PC-9 (cell line): ENCODE measurements at regions of chr9 and their contacts with region 1.

Region 1: DNA sequence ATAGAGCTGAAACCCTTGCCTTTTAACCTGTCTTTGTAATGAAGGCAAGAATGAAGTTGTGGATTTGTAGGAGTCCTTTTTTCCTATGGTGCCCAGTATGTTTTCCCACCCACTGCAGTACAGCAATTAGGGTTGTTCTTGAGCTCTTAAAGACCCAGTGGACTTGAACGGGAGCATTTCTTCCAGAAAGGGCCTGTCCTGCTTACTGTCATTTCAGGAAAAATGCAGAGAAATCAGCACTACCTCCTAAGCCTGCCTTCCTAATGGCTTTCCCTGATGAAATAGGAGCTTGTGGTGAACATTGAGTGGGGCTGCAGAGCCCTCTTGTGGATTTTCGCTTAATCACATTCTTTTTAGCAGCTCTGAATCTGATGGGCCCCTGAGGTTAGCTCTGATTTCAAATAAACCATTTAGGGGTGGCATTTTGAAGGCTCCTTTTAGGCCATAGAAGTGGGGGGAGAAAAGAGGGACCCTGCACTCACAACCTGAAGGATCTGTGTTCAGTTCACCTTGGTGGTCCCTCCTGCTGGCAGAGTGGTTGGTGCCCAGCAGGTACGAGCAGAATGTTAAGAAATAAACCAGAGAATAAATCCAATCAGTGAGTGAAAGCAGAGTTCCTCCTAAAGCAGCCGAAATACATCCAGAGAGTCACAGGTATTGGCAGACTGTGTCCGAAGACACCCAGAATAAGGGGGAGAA is 188.0 kb upstream of the KLF9 start:
- DNase-seq: peak; percentile 56 to 57
- H3K4me3 ChIP-seq: no peak overlapping the region
- H3K27ac ChIP-seq: no peak overlapping the region
- H3K4me1 ChIP-seq: no peaks in the 10 kb centered on the region
- H3K27me3 ChIP-seq: no peaks in the 10 kb centered on the region
- CTCF ChIP-seq: peak; percentile 87

Region 2: DNA sequence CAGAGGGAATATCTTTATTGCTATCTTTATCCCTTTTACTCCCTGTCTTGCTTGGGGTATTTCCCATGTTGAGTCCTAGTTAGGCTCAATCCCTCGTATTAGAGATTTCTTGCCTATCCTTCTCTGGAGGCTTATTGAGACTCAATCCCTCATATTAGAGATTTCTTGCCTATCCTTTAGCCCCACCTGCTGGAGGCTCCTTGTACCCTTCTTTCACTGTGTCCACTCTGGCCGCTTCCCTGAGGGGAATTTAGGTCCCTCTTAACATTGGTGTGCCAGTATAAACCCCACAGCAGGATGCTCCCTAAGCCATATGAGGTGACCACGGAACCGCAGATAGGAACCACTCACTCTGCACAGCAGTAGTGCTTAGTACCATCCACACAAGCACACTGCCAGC is 669.6 kb before region 1 on chr9:
- CTCF ChIA-PET with region 1: no interaction called
- POLR2A ChIA-PET with region 1: no interaction called
- intact Hi-C with region 1: loop called (anchors 5 kb)
- DNase-seq: peak in 1 of 2 experiments; percentile 17
- H3K4me3 ChIP-seq: no peak overlapping the region
- H3K27ac ChIP-seq: no peak overlapping the region
- H3K4me1 ChIP-seq: no peaks in the 10 kb centered on the region
- H3K27me3 ChIP-seq: no peaks in the 10 kb centered on the region
- CTCF ChIP-seq: peak; percentile 59

Region 3: GRCh38 chr9:70340572-70340971 is 261.9 kb before region 1 on chr9:
- CTCF ChIA-PET with region 1: interaction called, 5 read pairs
- POLR2A ChIA-PET with region 1: no interaction called
- intact Hi-C with region 1: loop called (anchors 1 kb)
- DNase-seq: no peak
- H3K4me3 ChIP-seq: no peak overlapping the region
- H3K27ac ChIP-seq: no peak overlapping the region
- H3K4me1 ChIP-seq: no peaks in the 10 kb centered on the region
- H3K27me3 ChIP-seq: no peaks in the 10 kb centered on the region
- CTCF ChIP-seq: peak; percentile 78

Region 4: DNA sequence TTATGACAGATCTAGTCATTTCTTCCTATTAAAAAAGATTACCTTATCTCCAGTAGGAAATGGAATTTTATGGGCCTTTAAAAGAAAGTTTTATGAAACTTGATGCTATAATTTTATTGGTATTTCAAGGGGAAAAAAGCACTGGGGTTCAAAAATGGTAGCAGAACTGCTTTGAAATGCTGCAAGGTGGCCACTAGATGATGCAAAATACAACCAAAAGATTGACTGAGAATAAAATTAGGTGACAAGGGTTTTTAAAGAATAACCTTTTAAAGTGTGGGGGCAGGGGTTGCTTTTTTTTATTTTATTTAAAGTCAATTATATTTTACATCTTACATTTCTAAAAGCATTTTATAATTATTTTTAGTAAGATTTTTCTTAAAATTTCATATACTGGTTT is 249.7 kb before region 1 on chr9:
- CTCF ChIA-PET with region 1: no interaction called
- POLR2A ChIA-PET with region 1: no interaction called
- intact Hi-C with region 1: loop called (anchors 1 kb)
- DNase-seq: no peak
- H3K4me3 ChIP-seq: no peak overlapping the region
- H3K27ac ChIP-seq: no peak overlapping the region
- H3K4me1 ChIP-seq: no peaks in the 10 kb centered on the region
- H3K27me3 ChIP-seq: no peaks in the 10 kb centered on the region
- CTCF ChIP-seq: peak; percentile 41; the same call in 1 of the 2 replicates

Region 5: DNA sequence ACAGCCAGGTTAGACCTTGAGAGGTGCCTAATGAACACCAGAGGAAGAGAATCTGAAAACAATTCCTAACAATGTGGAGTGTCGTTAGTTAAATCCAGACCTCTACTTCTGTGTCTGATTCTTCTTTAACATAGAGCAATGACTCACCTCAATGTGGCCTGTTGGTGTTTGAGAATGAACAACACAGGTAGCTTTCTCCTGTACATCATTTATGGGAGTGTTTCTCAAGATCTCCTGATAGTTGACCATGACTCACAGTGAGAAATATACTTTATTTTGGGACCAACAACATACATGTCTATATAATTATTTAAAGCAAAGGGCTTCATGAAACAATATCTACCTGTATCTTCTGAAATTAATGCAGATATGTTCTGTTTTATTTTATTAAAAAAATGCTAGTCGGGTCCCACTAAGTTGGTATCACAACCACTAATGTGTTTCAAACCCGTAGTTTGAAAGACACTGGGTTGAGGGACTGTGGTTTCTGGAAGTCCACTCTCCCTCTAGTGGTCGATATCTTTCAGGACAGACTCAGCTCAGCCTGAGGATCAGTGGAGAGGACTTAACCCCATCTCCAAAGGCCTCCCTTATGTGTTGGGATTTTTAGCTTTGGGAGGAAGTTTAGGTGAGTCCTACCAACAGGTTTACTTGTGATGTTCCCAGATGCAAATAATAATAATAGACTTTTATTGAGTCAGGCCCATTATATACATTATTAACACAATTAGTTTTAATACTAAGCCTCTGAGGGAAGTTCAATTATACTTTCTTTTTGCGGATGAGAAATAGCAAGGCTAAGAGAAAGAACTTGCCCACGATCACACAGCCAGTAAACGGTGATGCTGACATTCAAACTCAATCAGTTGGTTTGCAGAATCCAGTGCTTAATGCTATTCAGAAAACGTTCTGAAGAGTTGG is 118.0 kb before region 1 on chr9:
- CTCF ChIA-PET with region 1: interaction called, 4 read pairs
- POLR2A ChIA-PET with region 1: no interaction called
- intact Hi-C with region 1: loop called (anchors 2 kb)
- DNase-seq: peak; percentile 21 to 49
- H3K4me3 ChIP-seq: no peak overlapping the region
- H3K27ac ChIP-seq: no peak overlapping the region
- H3K4me1 ChIP-seq: peaks cover 14% of the 10 kb centered on the region; the same call in 1 of the 2 replicates
- H3K27me3 ChIP-seq: no peaks in the 10 kb centered on the region
- CTCF ChIP-seq: peak; percentile 80